T-cell (primary cell): ENCODE measurements at regions of chr11 and their contacts with region 1.

Region 1: GRCh38 chr11:75896843-75897419 is 81.9 kb downstream of the UVRAG start:
- DNase-seq: peak in 1 of 35 experiments; percentile 48
- ATAC-seq: peak in 1 of 4 experiments; percentile 40
- H3K4me3 ChIP-seq: no peak overlapping the region
- H3K4me3 Mint-ChIP-seq: no peak overlapping the region
- H3K27ac ChIP-seq: no peak overlapping the region
- H3K27ac Mint-ChIP-seq: no peak overlapping the region
- H3K4me1 ChIP-seq: no peaks in the 10 kb centered on the region
- H3K4me1 Mint-ChIP-seq: peaks cover 2 to 8% (median 5%) of the 10 kb centered on the region in 3 donors
- H3K27me3 ChIP-seq: no peaks in the 10 kb centered on the region
- H3K27me3 Mint-ChIP-seq: no peaks in the 10 kb centered on the region

Region 2: DNA sequence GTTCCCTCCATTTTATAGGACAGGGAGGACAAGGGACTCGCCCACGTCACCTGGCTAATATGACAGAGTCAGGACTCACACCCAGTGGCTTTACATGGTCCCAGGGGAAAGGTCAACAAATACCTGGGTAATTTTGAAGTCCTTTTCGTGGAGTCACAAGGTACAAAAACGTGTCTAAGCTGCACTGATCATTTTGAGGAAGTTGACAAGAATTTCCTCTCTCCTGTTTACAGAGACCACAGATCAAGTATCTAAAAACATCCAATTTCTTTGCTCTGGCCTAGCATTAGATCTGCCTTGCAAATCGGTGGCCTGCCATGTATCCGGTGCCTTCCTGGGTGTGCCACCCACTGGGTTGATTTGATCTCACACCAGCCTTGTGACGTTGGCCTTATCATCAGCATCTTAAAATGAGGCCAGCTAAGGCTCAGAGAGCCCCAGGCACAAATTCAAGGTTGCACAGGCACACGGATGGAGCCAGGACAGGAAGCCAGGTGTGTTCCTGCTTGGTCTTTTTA is 388.8 kb before region 1 on chr11:
- CTCF ChIA-PET with region 1: no interaction called
- POLR2A ChIA-PET with region 1: interaction called in 1 of 2 experiments, 12 read pairs
- DNase-seq: peak; percentile 33 to 79 (median 57)
- ATAC-seq: peak; percentile 88 to 98 (median 96)
- H3K4me3 ChIP-seq: no peak overlapping the region
- H3K4me3 Mint-ChIP-seq: peak overlapping the region in 2 of 3 donors; percentile 34 to 55
- H3K27ac ChIP-seq: peak overlapping the region; percentile 84
- H3K27ac Mint-ChIP-seq: peak overlapping the region; percentile 97
- H3K4me1 ChIP-seq: peaks cover 9 to 34% of the 10 kb centered on the region in 2 experiments
- H3K4me1 Mint-ChIP-seq: peaks cover 20 to 40% (median 28%) of the 10 kb centered on the region in 3 donors
- H3K27me3 ChIP-seq: peaks cover 0 to 3% of the 10 kb centered on the region in 2 experiments
- H3K27me3 Mint-ChIP-seq: no peaks in the 10 kb centered on the region

Region 3: GRCh38 chr11:75760710-75761493 is 136.0 kb before region 1 on chr11:
- CTCF ChIA-PET with region 1: no interaction called
- POLR2A ChIA-PET with region 1: no interaction called
- DNase-seq: no peak
- ATAC-seq: no peak
- H3K4me3 ChIP-seq: no peak overlapping the region
- H3K4me3 Mint-ChIP-seq: no peak overlapping the region
- H3K27ac ChIP-seq: no peak overlapping the region
- H3K27ac Mint-ChIP-seq: no peak overlapping the region
- H3K4me1 ChIP-seq: no peaks in the 10 kb centered on the region
- H3K4me1 Mint-ChIP-seq: no peaks in the 10 kb centered on the region
- H3K27me3 ChIP-seq: no peaks in the 10 kb centered on the region
- H3K27me3 Mint-ChIP-seq: no peaks in the 10 kb centered on the region

Region 4: DNA sequence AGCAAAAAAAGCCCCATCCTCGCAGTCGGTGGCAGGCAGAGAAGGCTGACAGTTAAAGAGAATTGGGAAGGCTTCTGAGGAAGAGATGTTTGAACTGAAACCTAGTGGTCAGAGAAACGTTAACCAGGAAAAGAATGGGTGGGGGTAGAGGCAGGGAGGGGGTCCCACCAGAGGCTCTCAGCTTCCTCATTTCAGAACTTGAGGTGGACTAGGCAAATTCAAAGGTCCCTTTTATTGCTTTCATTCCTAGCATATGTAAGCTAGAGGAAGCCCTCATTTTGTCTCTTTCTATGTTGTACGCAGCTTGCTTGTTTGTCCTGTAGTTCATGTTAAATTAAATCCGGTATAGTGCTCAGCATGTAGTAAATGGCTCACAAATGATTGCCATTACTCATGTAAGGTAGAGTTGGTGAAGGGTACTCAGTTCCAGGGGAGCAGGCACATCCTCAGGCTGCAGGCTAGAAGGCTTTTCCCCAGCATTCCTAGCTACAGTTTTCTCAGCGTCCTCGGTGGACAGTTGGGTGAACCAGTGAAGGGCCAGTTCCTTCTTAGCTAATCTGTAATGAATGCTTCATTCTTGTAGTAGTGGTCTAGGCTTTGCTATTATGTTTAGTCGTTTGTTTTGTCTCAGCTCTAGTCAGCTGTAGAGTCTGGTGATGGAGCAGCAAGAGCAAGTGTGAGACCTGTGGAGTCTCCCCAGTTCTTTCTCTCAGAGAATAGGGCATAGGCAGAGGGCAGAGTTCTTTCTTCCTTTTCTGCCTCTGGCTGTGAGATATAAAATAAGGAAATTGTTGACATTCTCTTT is 23.3 kb before region 1 on chr11:
- CTCF ChIA-PET with region 1: no interaction called
- POLR2A ChIA-PET with region 1: no interaction called
- DNase-seq: no peak
- ATAC-seq: no peak
- H3K4me3 ChIP-seq: no peak overlapping the region
- H3K4me3 Mint-ChIP-seq: no peak overlapping the region
- H3K27ac ChIP-seq: no peak overlapping the region
- H3K27ac Mint-ChIP-seq: peak overlapping the region in 1 of 2 donors; percentile 56
- H3K4me1 ChIP-seq: no peaks in the 10 kb centered on the region
- H3K4me1 Mint-ChIP-seq: peaks cover 11 to 26% (median 19%) of the 10 kb centered on the region in 3 donors
- H3K27me3 ChIP-seq: no peaks in the 10 kb centered on the region
- H3K27me3 Mint-ChIP-seq: no peaks in the 10 kb centered on the region

Region 5: DNA sequence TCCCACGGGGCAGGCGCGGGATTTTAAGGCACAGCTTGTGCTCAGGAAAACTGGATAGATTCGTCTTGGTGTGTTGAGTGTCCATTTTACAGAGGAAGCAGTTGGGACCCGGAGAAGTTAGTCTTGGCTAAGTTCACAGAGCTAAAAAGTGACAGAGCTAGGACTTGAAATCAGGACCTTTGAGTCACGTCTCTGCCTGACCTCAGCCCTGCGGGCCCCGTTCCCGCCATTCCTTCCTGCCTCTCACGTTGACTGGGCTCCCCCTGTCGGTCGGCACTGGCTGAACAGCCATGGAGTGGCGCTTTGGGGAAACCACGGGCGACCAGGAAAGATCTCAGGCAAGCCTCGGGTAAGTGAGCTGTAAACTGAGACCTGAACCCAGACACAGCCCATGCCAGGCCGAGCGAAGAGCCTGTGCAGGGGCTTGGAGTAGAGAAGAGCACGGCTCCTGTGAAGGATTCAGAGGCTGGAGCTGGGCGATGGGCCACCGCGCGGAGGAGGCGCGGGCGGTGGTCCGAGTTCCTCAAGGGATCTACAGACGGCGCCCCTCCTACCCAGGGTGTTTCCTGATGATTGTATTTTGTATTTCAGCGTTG is 255.3 kb after region 1 on chr11:
- CTCF ChIA-PET with region 1: interaction called, 8 to 29 read pairs
- POLR2A ChIA-PET with region 1: no interaction called
- DNase-seq: peak; percentile 36 to 83 (median 70)
- ATAC-seq: peak; percentile 86 to 91 (median 86)
- H3K4me3 ChIP-seq: peak overlapping the region; percentile 35 to 72
- H3K4me3 Mint-ChIP-seq: peak overlapping the region; percentile 66 to 79 (median 69)
- H3K27ac ChIP-seq: no peak overlapping the region
- H3K27ac Mint-ChIP-seq: no peak overlapping the region
- H3K4me1 ChIP-seq: peaks cover 0 to 26% of the 10 kb centered on the region in 2 experiments
- H3K4me1 Mint-ChIP-seq: peaks cover 20 to 25% (median 24%) of the 10 kb centered on the region in 3 donors
- H3K27me3 ChIP-seq: peaks cover 0 to 10% of the 10 kb centered on the region in 2 experiments
- H3K27me3 Mint-ChIP-seq: peaks cover 0 to 13% of the 10 kb centered on the region in 2 donors

Region 6: DNA sequence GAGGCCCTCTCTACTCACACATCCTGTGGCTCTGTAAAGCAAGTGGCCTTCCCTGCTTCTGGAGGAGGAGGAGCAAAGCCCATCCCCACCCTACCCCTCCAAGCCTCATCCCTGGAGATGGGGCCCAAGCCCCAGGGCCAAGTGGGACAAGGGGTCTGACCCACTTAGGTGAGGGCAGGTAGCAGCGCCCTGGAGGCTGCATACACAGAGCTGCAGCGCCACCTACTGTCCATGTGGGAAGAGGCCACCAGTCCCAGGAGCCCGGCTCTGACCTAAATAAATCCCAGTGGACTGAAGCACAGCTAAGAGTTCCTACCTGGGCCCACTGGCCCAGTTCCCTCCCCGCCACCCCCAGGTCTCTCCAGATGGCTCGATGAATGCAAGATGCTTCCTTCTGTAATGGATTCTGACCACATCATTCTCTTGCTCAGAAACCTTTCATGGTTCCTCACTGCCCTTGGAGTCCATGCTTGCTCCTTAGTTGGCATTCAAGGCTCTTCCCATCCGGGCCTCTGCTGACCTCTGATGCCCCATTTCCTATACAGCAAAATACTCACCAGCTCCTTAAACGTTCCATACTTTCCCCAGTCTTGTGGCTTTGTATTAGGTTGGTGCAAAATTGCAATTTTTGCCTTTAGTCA is 421.9 kb after region 1 on chr11:
- CTCF ChIA-PET with region 1: interaction called in 1 of 2 experiments, 13 read pairs
- POLR2A ChIA-PET with region 1: no interaction called
- DNase-seq: peak; percentile 51 to 94 (median 80)
- ATAC-seq: peak; percentile 90 to 100 (median 92)
- H3K4me3 ChIP-seq: no peak overlapping the region
- H3K4me3 Mint-ChIP-seq: no peak overlapping the region
- H3K27ac ChIP-seq: no peak overlapping the region
- H3K27ac Mint-ChIP-seq: no peak overlapping the region
- H3K4me1 ChIP-seq: peaks cover 0 to 6% of the 10 kb centered on the region in 2 experiments
- H3K4me1 Mint-ChIP-seq: peaks cover 0 to 10% (median 5%) of the 10 kb centered on the region in 3 donors
- H3K27me3 ChIP-seq: peaks cover 0 to 54% of the 10 kb centered on the region in 2 experiments
- H3K27me3 Mint-ChIP-seq: peaks cover 35 to 40% of the 10 kb centered on the region in 2 donors